Dendritic cell treated with granulocyte-macrophage colony-stimulating factor and Interleukin-4, amounts not matched to agents 40 ng/mL and 50 ng/mL, for 4 days (primary cell): ENCODE measurements at regions of chr20 and their contacts with region 1.

Region 1: DNA sequence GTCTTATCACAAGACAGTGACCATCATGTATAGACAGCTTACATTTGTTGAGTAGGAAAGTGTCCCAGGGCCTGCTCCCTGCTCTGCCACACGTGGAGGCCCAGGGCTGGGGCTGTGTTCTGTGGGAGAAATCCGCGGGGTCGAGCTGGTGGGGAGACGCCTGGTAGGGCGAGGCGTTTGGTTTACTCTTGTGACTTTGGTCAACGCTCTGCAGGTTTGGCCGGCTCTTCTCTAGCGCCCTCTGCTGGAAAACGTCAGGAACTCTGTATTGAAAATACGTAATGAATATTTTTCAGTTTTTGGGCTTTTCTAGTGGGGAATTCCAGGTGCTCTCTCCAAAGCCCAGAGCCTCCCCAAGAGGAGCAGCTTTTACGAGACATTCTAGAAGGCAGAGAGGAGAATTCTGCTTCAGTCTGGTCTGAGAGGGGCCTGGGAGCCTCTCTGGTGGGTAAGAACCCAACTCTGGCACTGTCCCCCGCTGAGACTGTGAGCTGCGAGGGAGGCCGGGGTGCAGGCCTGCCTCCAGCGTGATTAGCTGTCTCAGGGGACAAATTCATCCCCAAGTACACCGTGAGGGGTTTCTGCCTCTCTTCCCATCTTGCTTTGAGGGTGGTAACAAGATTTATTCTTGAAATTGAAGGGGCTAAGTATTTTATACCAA is 112.6 kb upstream of the RALGAPA2 start:
- H3K4me3 Mint-ChIP-seq: no peak overlapping the region
- H3K27ac Mint-ChIP-seq: no peak overlapping the region
- H3K4me1 Mint-ChIP-seq: peaks cover 39% of the 10 kb centered on the region
- H3K27me3 Mint-ChIP-seq: peaks cover 52% of the 10 kb centered on the region

Region 2: GRCh38 chr20:20664795-20665589 is 160.1 kb before region 1 on chr20:
- intact Hi-C with region 1: loop called (anchors 1 kb)
- H3K4me3 Mint-ChIP-seq: no peak overlapping the region
- H3K27ac Mint-ChIP-seq: no peak overlapping the region
- H3K4me1 Mint-ChIP-seq: peaks cover 31% of the 10 kb centered on the region
- H3K27me3 Mint-ChIP-seq: no peaks in the 10 kb centered on the region

Region 3: DNA sequence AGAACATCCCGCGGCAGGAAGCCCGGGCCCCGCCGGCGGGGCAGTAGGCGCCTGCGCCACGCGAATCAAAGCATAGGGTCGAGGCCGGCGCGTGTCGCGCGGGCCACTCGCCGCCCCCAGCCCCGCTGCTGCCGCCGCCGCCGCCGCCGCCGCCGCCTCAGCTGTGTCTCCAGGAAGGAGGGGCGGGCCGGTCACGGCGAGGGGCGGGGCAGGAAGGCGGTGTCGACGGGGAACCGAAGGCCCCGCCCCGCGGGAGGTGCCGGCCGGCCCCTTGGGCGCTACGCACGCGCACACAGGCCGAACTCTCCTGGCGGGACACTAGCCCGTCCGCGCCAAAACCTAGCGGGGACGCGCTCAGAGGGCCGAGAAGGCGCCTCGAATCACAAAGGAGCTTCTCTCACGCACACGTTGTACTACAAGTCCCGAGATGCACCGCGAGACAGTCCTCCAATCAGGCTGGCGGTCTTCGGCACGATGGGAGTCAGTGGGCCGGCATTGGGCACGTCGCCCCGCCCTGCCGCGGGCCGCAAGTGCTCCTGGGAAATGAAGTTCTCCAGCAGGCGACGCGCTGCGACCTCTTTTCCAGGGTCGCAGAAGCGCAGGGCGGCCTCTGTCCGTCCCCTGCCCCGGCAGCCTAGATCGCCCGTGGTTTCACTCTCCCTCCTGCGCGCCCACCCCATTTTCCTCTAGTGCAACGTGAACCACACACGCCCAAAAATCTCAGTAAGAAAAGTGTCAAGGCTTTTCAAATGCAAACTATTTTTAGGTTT is 112.4 kb before region 1 on chr20 and contains the start of gene RALGAPA2:
- intact Hi-C with region 1: loop called (anchors 5 kb)
- H3K4me3 Mint-ChIP-seq: peak within 1 kb of the TSS; percentile 94
- H3K27ac Mint-ChIP-seq: peak within 1 kb of the TSS; percentile 95
- H3K4me1 Mint-ChIP-seq: peaks cover 40% of the 10 kb centered on the region
- H3K27me3 Mint-ChIP-seq: no peaks in the 10 kb centered on the region